Activated CD8-positive, alpha-beta memory T cell treated with anti-CD3 and anti-CD28 coated beads, Interleukin-2, amount 10 ng/mL, durations not matched to agents 7 days and 5 days (primary cell): ENCODE measurements at regions of chr16 and their contacts with region 1.

Region 1: DNA sequence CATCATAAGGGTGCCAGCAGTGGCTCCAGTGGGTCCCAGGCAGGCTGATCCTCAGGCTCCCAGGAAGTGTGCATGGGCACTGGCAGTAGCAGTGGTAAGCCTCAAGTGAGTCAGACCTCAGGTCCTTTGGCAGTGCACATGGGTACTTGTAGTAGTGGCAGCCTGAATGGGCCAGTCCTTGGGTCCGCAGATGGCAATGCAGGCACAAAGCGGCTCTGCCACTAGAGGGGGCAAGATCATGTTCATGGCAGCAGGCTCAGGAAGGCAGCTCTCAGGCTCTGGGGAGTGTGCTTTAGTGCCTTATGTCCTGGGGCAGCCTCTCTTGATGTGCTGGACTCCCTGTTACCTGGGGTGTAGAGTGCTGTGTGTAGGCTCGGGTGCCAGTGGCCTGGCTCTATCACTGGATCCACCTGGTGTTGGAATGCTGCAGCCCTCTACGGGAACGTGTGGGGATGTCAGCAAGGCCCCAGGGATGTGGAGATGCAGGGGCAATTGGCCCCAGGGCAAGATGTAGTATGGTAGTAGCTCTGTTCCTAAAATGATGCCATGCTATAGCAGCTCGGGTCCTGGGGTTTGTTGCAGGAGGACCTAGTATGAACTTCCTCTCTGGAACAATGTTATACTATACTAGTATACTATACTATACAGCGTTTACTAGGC is 11.0 kb downstream of the ACSM3 start:
- DNase-seq: peak; percentile 81
- ATAC-seq: peak; percentile 85
- H3K4me3 Mint-ChIP-seq: no peak overlapping the region
- H3K27ac Mint-ChIP-seq: no peak overlapping the region
- H3K4me1 Mint-ChIP-seq: peaks cover 5% of the 10 kb centered on the region
- H3K27me3 Mint-ChIP-seq: no peaks in the 10 kb centered on the region

Region 2: GRCh38 chr16:20763461-20764232 is 11.2 kb before region 1 on chr16 and contains the start of gene ACSM3:
- CTCF ChIA-PET with region 1: interaction called, 16 read pairs
- DNase-seq: peak; percentile 84
- ATAC-seq: peak; percentile 100
- H3K4me3 Mint-ChIP-seq: peak within 1 kb of the TSS; percentile 85
- H3K27ac Mint-ChIP-seq: peak within 1 kb of the TSS; percentile 92
- H3K4me1 Mint-ChIP-seq: peaks cover 23% of the 10 kb centered on the region
- H3K27me3 Mint-ChIP-seq: no peaks in the 10 kb centered on the region
- total RNA-seq, gene ACSM3: 9.4 to 10.1 TPM